ENCODE measurements at regions of chr6 and their contacts with region 1.

Region 1: GRCh38 chr6:148947621-148948444 is 201.0 kb downstream of the UST start:
- DNase-seq: peak; percentile 66 to 78 (median 68)
- ATAC-seq: peak; percentile 98
- H3K4me3 ChIP-seq: no peak overlapping the region
- H3K27ac ChIP-seq: no peak overlapping the region
- H3K4me1 ChIP-seq: no peaks in the 10 kb centered on the region
- H3K27me3 ChIP-seq: peaks cover 6 to 7% of the 10 kb centered on the region in 2 experiments; a peak in 4 of 5 replicates
- CTCF ChIP-seq: peak; percentile 75 to 89 (median 82)
- EP300 ChIP-seq: no peak
- POLR2A ChIP-seq: no peak
- RAD21 ChIP-seq: peak; percentile 59 to 78

Region 2: DNA sequence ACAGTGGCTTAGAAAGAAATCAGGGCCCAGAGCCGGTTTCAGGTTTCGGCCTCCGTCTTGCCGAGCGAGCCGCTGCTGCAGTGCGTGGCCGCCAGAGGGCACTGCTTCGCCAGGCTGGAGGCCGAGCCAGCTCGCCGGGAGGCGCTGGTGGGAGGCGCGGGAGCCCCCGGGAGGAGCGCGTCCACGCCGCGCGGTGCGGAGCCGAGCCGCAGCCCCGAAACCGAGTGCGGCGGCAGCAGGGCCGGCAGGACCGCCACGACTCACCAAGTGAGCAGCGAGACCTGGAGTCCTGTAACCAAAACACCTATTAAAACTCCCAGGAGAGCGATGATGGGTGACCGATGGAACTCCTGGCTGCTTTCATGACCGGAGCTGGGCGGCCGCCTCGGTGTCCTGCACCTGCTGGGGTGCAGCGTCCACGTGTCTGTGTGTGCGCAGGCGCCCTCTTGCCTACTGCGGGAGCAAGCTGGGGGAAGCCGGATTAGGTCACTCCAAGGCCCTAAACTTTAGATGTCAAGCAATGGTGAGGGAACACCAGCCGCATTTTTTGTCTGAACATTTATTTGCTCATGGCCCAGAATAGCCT is 387.9 kb before region 1 on chr6:
- CTCF ChIA-PET with region 1: interaction called, 13 read pairs
- POLR2A ChIA-PET with region 1: no interaction called
- in situ Hi-C with region 1: no loop called
- intact Hi-C with region 1: loop called (anchors 2 kb)
- DNase-seq: peak; percentile 73 to 89 (median 82)
- ATAC-seq: peak; percentile 98
- H3K4me3 ChIP-seq: no peak overlapping the region
- H3K27ac ChIP-seq: no peak overlapping the region
- H3K4me1 ChIP-seq: peaks cover 0 to 6% of the 10 kb centered on the region in 2 experiments; a peak in 3 of 5 replicates
- H3K27me3 ChIP-seq: peaks cover 25 to 65% of the 10 kb centered on the region in 2 experiments
- CTCF ChIP-seq: peak; percentile 96 to 98 (median 98)
- EP300 ChIP-seq: no peak
- POLR2A ChIP-seq: no peak
- RAD21 ChIP-seq: peak; percentile 80 to 90

Region 3: DNA sequence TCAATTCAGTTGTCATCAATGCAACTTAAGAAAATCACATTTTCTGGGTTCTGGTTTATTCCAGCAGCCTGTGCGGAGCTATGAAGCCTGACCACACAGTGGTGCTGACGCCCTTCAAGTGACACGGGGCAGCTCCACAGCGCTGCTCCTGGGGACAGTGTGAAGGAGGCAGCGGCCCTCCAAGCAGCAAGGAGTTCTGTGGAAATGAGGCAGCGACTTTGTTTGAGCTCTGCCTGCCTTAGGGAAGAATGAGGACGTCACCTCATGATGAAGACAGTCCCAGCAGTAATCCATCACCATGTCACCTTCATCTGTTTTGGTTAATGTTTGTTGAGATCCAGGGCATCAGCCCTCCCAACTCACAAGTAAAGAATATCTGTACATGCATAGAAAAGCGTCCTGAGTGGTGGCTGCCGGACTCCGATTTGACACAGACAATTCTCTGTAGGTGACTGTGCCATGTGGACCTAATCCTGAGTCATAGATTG is 369.5 kb before region 1 on chr6:
- CTCF ChIA-PET with region 1: interaction called, 30 read pairs
- POLR2A ChIA-PET with region 1: no interaction called
- in situ Hi-C with region 1: loop called (anchors 10 kb)
- intact Hi-C with region 1: loop called (anchors 1 kb)
- DNase-seq: peak; percentile 19 to 78 (median 50)
- ATAC-seq: peak; percentile 100
- H3K4me3 ChIP-seq: no peak overlapping the region
- H3K27ac ChIP-seq: no peak overlapping the region
- H3K4me1 ChIP-seq: no peaks in the 10 kb centered on the region
- H3K27me3 ChIP-seq: peaks cover 2 to 9% of the 10 kb centered on the region in 2 experiments; a peak in 4 of 5 replicates
- CTCF ChIP-seq: peak; percentile 96 to 100 (median 100)
- EP300 ChIP-seq: no peak
- POLR2A ChIP-seq: no peak
- RAD21 ChIP-seq: peak; percentile 81 to 88

Region 4: GRCh38 chr6:148746363-148747144 is 201.3 kb before region 1 on chr6 and contains the start of gene UST:
- CTCF ChIA-PET with region 1: no interaction called
- POLR2A ChIA-PET with region 1: no interaction called
- in situ Hi-C with region 1: no loop called
- intact Hi-C with region 1: loop called (anchors 2 kb)
- DNase-seq: peak; percentile 38 to 74 (median 54)
- ATAC-seq: peak; percentile 90
- H3K4me3 ChIP-seq: peak within 1 kb of the TSS; percentile 41
- H3K27ac ChIP-seq: no peak within 1 kb of the TSS
- H3K4me1 ChIP-seq: peaks cover 0 to 15% of the 10 kb centered on the region in 2 experiments; a peak in 3 of 5 replicates
- H3K27me3 ChIP-seq: peaks cover 12 to 44% of the 10 kb centered on the region in 2 experiments; a peak in 4 of 5 replicates
- CTCF ChIP-seq: peak in 2 of 3 experiments; percentile 50 to 51; a peak in 4 of 6 replicates
- EP300 ChIP-seq: no peak
- POLR2A ChIP-seq: no peak
- RAD21 ChIP-seq: peak in 1 of 2 experiments; percentile 32; a peak in 1 of 4 replicates
- polyA plus RNA-seq, gene UST: 0.10 TPM in 1 of 2 experiments, not detected in the other

Region 5: DNA sequence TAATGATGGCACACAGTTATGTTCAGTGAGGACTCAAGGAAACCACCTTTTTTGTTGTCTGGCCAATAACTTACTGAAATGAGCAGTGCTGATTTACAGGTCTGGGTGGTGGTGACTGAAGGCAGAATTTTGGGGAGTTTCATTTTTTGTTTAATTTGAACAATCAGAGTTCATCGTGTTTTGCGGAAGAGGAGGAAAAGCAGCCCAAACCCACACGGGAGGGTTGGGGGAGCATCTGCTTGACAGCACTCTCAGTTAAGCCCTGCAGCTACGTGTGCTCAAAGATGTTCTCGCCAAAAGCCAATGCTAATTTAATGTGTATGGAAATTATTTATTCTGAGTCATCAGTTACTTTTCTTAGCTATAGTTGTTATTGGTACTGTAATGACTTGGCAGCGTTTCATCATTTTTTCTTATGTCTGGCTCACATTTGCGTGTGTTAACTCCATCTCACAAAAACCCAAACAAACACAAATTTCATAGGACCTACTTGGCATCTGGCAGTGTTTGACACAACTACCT is 111.9 kb before region 1 on chr6:
- CTCF ChIA-PET with region 1: no interaction called
- POLR2A ChIA-PET with region 1: no interaction called
- in situ Hi-C with region 1: no loop called
- intact Hi-C with region 1: no loop called
- DNase-seq: no peak
- ATAC-seq: no peak
- H3K4me3 ChIP-seq: no peak overlapping the region
- H3K27ac ChIP-seq: no peak overlapping the region
- H3K4me1 ChIP-seq: no peaks in the 10 kb centered on the region
- H3K27me3 ChIP-seq: peaks cover 10 to 25% of the 10 kb centered on the region in 2 experiments; a peak in 4 of 5 replicates
- CTCF ChIP-seq: no peak
- EP300 ChIP-seq: no peak
- POLR2A ChIP-seq: no peak
- RAD21 ChIP-seq: no peak

Region 6: GRCh38 chr6:148989585-148989984 is 41.8 kb after region 1 on chr6:
- CTCF ChIA-PET with region 1: no interaction called
- POLR2A ChIA-PET with region 1: no interaction called
- in situ Hi-C with region 1: no loop called
- intact Hi-C with region 1: no loop called
- DNase-seq: no peak
- ATAC-seq: no peak
- H3K4me3 ChIP-seq: no peak overlapping the region
- H3K27ac ChIP-seq: no peak overlapping the region
- H3K4me1 ChIP-seq: no peaks in the 10 kb centered on the region
- H3K27me3 ChIP-seq: peaks cover 9 to 13% of the 10 kb centered on the region in 2 experiments; a peak in 3 of 5 replicates
- CTCF ChIP-seq: no peak
- EP300 ChIP-seq: no peak
- POLR2A ChIP-seq: no peak
- RAD21 ChIP-seq: no peak

Region 7: DNA sequence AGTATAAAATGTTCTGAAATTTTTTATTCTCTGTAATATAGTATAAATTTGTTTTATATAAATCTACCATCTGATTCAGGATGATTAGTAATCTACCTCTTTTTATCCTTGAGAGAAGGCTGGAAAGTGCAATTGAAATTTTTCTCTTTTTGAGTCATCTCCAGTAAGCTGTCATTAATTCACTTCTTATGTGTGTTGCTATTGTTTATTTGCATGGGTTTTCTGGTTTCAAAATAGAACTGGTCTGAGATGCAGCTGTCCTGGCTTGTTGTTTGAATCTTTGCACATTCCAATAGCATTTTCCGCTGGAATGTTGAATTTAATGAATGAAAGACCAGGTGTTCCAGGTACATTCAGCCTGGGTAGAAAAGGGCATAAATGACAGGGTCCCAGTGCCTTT is 345.4 kb after region 1 on chr6:
- CTCF ChIA-PET with region 1: no interaction called
- POLR2A ChIA-PET with region 1: no interaction called
- in situ Hi-C with region 1: no loop called
- intact Hi-C with region 1: no loop called
- DNase-seq: no peak
- ATAC-seq: no peak
- H3K4me3 ChIP-seq: no peak overlapping the region
- H3K27ac ChIP-seq: no peak overlapping the region
- H3K4me1 ChIP-seq: no peaks in the 10 kb centered on the region
- H3K27me3 ChIP-seq: peaks cover 2 to 10% of the 10 kb centered on the region in 2 experiments; a peak in 2 of 5 replicates
- CTCF ChIP-seq: no peak
- EP300 ChIP-seq: no peak
- POLR2A ChIP-seq: no peak
- RAD21 ChIP-seq: no peak